Left colon (tissue), 2 donors: ENCODE measurements at regions of chr7 and their contacts with region 1.

Region 1: DNA sequence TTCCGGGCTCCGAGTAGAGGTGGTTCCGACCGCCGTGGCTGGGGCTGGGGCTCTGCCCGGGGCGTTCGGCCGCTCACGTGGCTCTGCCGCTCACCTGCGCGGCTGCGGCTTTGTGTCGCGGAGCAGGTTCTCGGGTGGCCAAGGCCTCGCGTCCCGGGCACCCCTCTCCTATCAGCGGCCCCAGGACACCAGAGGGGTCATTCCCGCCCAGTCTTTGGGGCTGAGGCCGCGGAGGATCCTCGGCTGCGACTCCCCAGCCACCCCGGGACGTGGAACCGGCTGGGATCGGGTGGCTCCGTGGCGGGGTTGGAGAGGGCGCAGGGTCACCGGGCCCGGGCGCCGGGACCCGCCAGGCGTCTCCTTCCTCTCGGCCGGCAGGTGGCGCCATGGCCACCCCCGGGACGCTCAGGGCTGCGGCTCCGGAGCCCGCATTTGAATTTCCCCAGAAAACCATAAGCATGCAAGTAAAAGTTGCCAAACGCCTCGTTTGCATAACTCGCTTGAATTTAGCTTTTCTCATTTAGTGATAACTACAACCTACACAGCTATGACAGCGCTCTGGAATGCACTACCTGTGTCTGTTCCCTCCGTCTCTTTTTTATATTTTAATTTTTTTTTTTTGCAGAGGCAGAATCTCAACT is 1.2 kb downstream of the COL26A1 start:
- DNase-seq: peak; percentile 31 to 69
- ATAC-seq: peak; percentile 95

Region 2: GRCh38 chr7:101507791-101508252 is 144.0 kb after region 1 on chr7:
- intact Hi-C with region 1: loop called in 1 of 2 experiments (anchors 10 kb)
- DNase-seq: peak in 1 of 2 donors; percentile 35
- ATAC-seq: peak; percentile 31